ENCODE measurements at regions of chr17 and their contacts with region 1.

Region 1: GRCh38 chr17:6796887-6797490 is 21.0 kb downstream of the FBXO39 start:
- DNase-seq: no peak
- ATAC-seq: no peak
- H3K4me3 ChIP-seq: peak overlapping the region in 2 of 3 experiments; percentile 42 to 52; a peak in 2 of 6 replicates
- H3K27ac ChIP-seq: peak overlapping the region; percentile 78
- H3K4me1 ChIP-seq: peaks cover 54% of the 10 kb centered on the region
- H3K27me3 ChIP-seq: no peaks in the 10 kb centered on the region
- CTCF ChIP-seq: no peak
- EP300 ChIP-seq: no peak
- POLR2A ChIP-seq: no peak
- RAD21 ChIP-seq: no peak

Region 2: GRCh38 chr17:6772016-6772415 is 25.0 kb before region 1 on chr17:
- CTCF ChIA-PET with region 1: no interaction called
- POLR2A ChIA-PET with region 1: no interaction called
- in situ Hi-C with region 1: no loop called
- intact Hi-C with region 1: loop called (anchors 1 kb)
- DNase-seq: no peak
- ATAC-seq: no peak
- H3K4me3 ChIP-seq: no peak overlapping the region
- H3K27ac ChIP-seq: no peak overlapping the region
- H3K4me1 ChIP-seq: no peaks in the 10 kb centered on the region
- H3K27me3 ChIP-seq: no peaks in the 10 kb centered on the region
- CTCF ChIP-seq: no peak
- EP300 ChIP-seq: no peak
- POLR2A ChIP-seq: no peak
- RAD21 ChIP-seq: no peak

Measured in HepG2 (cell line).